CD14-positive monocyte (primary cell): ENCODE measurements at regions of chr17 and their contacts with region 1.

Region 1: GRCh38 chr17:43940630-43941029 is 1.6 kb downstream of the PPY start:
- DNase-seq: no peak
- H3K4me3 ChIP-seq: no peak overlapping the region
- H3K4me3 Mint-ChIP-seq: no peak overlapping the region
- H3K27ac ChIP-seq: no peak overlapping the region
- H3K27ac Mint-ChIP-seq: no peak overlapping the region
- H3K4me1 ChIP-seq: peaks cover 13 to 21% of the 10 kb centered on the region in 2 donors
- H3K4me1 Mint-ChIP-seq: peaks cover 22% of the 10 kb centered on the region
- H3K27me3 ChIP-seq: peaks cover 0 to 24% of the 10 kb centered on the region in 2 donors
- H3K27me3 Mint-ChIP-seq: peaks cover 26 to 38% (median 33%) of the 10 kb centered on the region in 3 donors
- CTCF ChIP-seq: peak; percentile 47

Region 2: DNA sequence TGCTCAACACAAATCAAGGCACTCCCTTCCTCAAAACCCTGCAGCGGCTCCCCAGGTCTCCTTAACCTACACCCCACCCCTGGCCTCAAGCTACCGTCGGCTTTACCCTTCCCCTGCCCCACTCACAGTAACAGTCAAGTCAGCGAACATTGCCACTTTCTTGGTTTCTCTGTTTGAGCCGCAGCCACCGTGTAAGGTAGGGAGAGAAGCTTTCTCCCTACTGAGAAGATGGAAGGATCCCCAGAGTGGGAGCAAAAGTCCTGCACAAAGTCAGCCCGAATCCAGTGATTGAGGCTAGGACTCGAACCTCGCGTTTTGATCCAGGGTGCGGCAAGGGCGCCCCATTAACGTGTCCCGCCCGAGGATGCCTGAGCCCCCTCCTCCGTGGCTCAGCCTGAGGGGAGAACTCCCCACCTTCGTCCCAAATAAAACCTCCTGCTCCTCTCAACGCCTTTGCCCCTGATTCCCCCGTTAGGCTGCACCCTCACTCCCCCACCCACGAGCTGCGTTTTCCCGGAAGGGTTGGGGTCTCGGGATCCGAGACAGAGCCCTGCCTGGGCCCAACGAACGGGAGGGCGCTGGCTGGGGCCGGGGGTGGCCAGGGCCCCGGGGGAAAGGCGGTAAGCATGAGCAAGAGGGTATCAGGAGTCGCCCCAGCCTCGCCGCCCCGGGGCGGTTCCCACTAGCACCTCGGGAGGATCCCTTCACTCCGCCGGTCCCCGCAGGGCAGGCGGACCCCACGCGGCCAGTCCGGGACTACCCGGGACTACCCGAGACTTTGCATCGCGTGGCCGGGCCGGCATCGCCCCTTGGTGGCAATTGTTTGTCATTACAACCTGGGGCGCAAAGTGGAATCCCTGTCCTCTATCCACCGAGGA is 53.9 kb after region 1 on chr17:
- intact Hi-C with region 1: loop called (anchors 1 to 2 kb)
- DNase-seq: peak; percentile 34 to 61 (median 52)
- H3K4me3 ChIP-seq: no peak overlapping the region
- H3K4me3 Mint-ChIP-seq: peak overlapping the region in 1 of 2 donors; percentile 58
- H3K27ac ChIP-seq: no peak overlapping the region
- H3K27ac Mint-ChIP-seq: peak overlapping the region in 1 of 7 donors; percentile 5
- H3K4me1 ChIP-seq: peaks cover 7% of the 10 kb centered on the region in 2 donors
- H3K4me1 Mint-ChIP-seq: peaks cover 7% of the 10 kb centered on the region
- H3K27me3 ChIP-seq: peaks cover 12 to 38% of the 10 kb centered on the region in 2 donors
- H3K27me3 Mint-ChIP-seq: peaks cover 25 to 51% (median 44%) of the 10 kb centered on the region in 3 donors
- CTCF ChIP-seq: peak; percentile 86

Region 3: GRCh38 chr17:44044067-44044466 is 103.4 kb after region 1 on chr17:
- intact Hi-C with region 1: loop called (anchors 2 to 5 kb)
- DNase-seq: peak in 2 of 3 donors; percentile 19 to 39
- H3K4me3 ChIP-seq: peak overlapping the region in 1 of 3 experiments; percentile 38
- H3K4me3 Mint-ChIP-seq: no peak overlapping the region
- H3K27ac ChIP-seq: peak overlapping the region in 1 of 2 donors; percentile 84
- H3K27ac Mint-ChIP-seq: peak overlapping the region; percentile 75 to 96 (median 89)
- H3K4me1 ChIP-seq: peaks cover 29 to 40% of the 10 kb centered on the region in 2 donors
- H3K4me1 Mint-ChIP-seq: peaks cover 37% of the 10 kb centered on the region
- H3K27me3 ChIP-seq: no peaks in the 10 kb centered on the region
- H3K27me3 Mint-ChIP-seq: peaks cover 0 to 2% (median 0%) of the 10 kb centered on the region in 3 donors
- CTCF ChIP-seq: no peak

Region 4: GRCh38 chr17:44167181-44167861 is 226.7 kb after region 1 on chr17:
- intact Hi-C with region 1: loop called in 1 of 2 experiments (anchors 5 kb)
- DNase-seq: no peak
- H3K4me3 ChIP-seq: no peak overlapping the region
- H3K4me3 Mint-ChIP-seq: no peak overlapping the region
- H3K27ac ChIP-seq: no peak overlapping the region
- H3K27ac Mint-ChIP-seq: no peak overlapping the region
- H3K4me1 ChIP-seq: peaks cover 0 to 2% of the 10 kb centered on the region in 2 donors
- H3K4me1 Mint-ChIP-seq: peaks cover 3% of the 10 kb centered on the region
- H3K27me3 ChIP-seq: peaks cover 0 to 6% of the 10 kb centered on the region in 2 donors
- H3K27me3 Mint-ChIP-seq: peaks cover 3 to 5% (median 4%) of the 10 kb centered on the region in 3 donors
- CTCF ChIP-seq: no peak